K562 (cell line): ENCODE measurements at regions of chr6 and their contacts with region 1.

Region 1: DNA sequence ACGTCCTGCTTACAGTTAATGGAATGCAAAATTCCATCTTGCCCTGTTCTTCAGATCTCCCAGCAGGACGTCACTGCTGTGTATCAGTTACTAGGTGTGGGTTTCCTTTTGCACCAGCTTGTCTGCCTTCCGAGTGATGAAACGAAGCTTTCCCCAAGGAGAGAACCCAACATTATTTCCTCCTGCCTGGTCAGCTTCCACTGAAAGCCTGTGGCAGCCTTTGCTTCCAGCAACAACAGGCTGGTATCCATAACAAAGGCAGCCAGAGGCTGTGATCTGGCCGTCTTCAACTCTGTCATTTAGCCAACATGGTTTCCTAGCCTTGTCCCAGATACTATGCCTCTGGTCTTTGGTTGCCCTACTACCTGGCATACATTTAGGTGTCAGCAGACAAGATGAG is 78.9 kb upstream of the HEY2 start:
- DNase-seq: no peak
- ATAC-seq: no peak
- H3K4me3 ChIP-seq: no peak overlapping the region
- H3K27ac ChIP-seq: no peak overlapping the region
- H3K4me1 ChIP-seq: no peaks in the 10 kb centered on the region
- H3K27me3 ChIP-seq: peaks cover 5 to 6% of the 10 kb centered on the region in 2 experiments; a peak in 4 of 5 replicates
- CTCF ChIP-seq: no peak
- EP300 ChIP-seq: no peak
- POLR2A ChIP-seq: no peak
- RAD21 ChIP-seq: no peak

Region 2: GRCh38 chr6:125639466-125640020 is 31.0 kb before region 1 on chr6:
- CTCF ChIA-PET with region 1: no interaction called
- POLR2A ChIA-PET with region 1: no interaction called
- in situ Hi-C with region 1: no loop called
- intact Hi-C with region 1: loop called (anchors 1 kb)
- DNase-seq: no peak
- ATAC-seq: peak; percentile 53
- H3K4me3 ChIP-seq: no peak overlapping the region
- H3K27ac ChIP-seq: no peak overlapping the region
- H3K4me1 ChIP-seq: peaks cover 0 to 5% of the 10 kb centered on the region in 2 experiments; a peak in 1 of 5 replicates
- H3K27me3 ChIP-seq: no peaks in the 10 kb centered on the region
- CTCF ChIP-seq: no peak
- EP300 ChIP-seq: no peak
- POLR2A ChIP-seq: no peak
- RAD21 ChIP-seq: no peak

Region 3: DNA sequence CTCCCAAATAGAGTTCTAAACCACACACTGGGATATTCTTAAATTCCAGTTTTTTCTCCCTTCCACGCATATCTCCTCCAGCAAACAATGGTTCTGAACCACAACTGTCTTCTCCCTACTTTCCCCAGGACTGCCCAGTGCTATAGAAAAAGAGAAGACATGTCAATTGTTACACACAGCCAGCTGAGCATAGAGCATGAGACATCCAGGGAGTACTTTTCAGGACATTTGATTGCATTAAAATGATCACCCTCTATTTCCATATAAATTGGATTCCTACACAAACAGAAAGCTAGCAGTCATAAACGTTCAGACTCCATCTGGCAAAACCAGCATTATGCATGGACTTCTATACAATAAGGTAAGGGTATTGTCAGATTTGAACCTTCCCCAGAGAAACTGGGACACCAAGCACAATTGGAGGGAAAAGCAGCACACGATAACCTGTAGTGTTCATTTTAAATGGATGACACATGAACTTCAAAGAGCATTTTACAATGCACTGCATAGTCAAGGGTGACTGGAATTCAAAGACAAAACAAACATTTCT is 14.2 kb before region 1 on chr6:
- CTCF ChIA-PET with region 1: no interaction called
- POLR2A ChIA-PET with region 1: no interaction called
- in situ Hi-C with region 1: no loop called
- intact Hi-C with region 1: no loop called
- DNase-seq: no peak
- ATAC-seq: peak; percentile 40; the same call in 1 of the 3 replicates
- H3K4me3 ChIP-seq: no peak overlapping the region
- H3K27ac ChIP-seq: no peak overlapping the region
- H3K4me1 ChIP-seq: no peaks in the 10 kb centered on the region
- H3K27me3 ChIP-seq: peaks cover 0 to 6% of the 10 kb centered on the region in 2 experiments; a peak in 3 of 5 replicates
- CTCF ChIP-seq: no peak
- EP300 ChIP-seq: no peak
- POLR2A ChIP-seq: no peak
- RAD21 ChIP-seq: no peak

Region 4: GRCh38 chr6:125707615-125708243 is 37.2 kb after region 1 on chr6:
- CTCF ChIA-PET with region 1: no interaction called
- POLR2A ChIA-PET with region 1: no interaction called
- in situ Hi-C with region 1: no loop called
- intact Hi-C with region 1: no loop called
- DNase-seq: no peak
- ATAC-seq: no peak
- H3K4me3 ChIP-seq: no peak overlapping the region
- H3K27ac ChIP-seq: no peak overlapping the region
- H3K4me1 ChIP-seq: no peaks in the 10 kb centered on the region
- H3K27me3 ChIP-seq: peaks cover 0 to 3% of the 10 kb centered on the region in 2 experiments; a peak in 2 of 5 replicates
- CTCF ChIP-seq: no peak
- EP300 ChIP-seq: no peak
- POLR2A ChIP-seq: no peak
- RAD21 ChIP-seq: no peak